Caco-2 (cell line): ENCODE measurements at regions of chr6 and their contacts with region 1.

Region 1: DNA sequence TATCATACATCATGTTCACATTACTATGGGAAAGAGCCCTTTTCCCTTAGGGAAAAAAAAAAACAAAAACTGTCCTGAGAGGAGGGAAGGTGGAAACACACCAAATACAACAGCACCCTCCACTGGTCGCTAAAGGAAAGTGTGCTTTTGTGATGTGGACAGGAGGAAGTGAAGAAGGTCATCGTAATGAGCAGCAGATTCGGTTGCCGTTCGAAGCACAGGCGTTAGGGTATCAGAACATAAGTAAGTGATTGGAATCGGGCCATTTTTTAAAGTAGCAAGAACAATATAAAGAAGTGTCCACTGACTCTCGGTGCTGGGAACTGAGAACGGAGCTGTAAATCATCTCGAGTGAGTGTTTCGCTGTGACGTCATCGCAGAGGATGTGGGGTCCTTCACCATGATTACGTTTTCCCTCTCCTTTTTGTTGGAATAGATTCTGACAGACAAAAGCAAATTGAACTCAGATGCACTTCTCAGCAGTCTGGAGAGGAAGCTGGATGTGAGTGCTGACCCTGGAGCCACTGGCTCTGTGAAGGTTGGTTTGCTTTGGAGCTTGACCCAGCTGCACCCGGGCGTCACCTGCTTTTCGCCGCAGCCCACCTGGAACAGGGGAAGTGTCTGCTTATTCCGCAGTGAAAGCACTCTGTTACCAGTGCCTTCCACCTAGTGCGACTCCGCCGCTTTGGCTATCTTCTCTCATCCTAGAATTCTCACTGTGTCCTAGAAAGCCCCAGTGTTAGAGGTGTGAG is 203.6 kb upstream of the GMDS start:
- DNase-seq: peak; percentile 68 to 70
- H3K4me3 ChIP-seq: peak overlapping the region; percentile 41
- H3K4me3 Mint-ChIP-seq: peak overlapping the region; percentile 85
- H3K27ac Mint-ChIP-seq: peak overlapping the region; percentile 90
- H3K4me1 ChIP-seq: peaks cover 14% of the 10 kb centered on the region
- H3K4me1 Mint-ChIP-seq: peaks cover 8% of the 10 kb centered on the region
- H3K27me3 ChIP-seq: no peaks in the 10 kb centered on the region
- H3K27me3 Mint-ChIP-seq: no peaks in the 10 kb centered on the region
- CTCF ChIP-seq: peak; percentile 65 to 81

Region 2: GRCh38 chr6:1596088-1596852 is 852.7 kb before region 1 on chr6:
- CTCF ChIA-PET with region 1: no interaction called
- POLR2A ChIA-PET with region 1: no interaction called
- intact Hi-C with region 1: loop called (anchors 5 kb)
- DNase-seq: peak; percentile 60 to 78
- H3K4me3 ChIP-seq: no peak overlapping the region
- H3K4me3 Mint-ChIP-seq: peak overlapping the region; percentile 23
- H3K27ac Mint-ChIP-seq: no peak overlapping the region
- H3K4me1 ChIP-seq: peaks cover 21% of the 10 kb centered on the region
- H3K4me1 Mint-ChIP-seq: peaks cover 17% of the 10 kb centered on the region
- H3K27me3 ChIP-seq: no peaks in the 10 kb centered on the region
- H3K27me3 Mint-ChIP-seq: peaks cover 5% of the 10 kb centered on the region
- CTCF ChIP-seq: peak; percentile 85 to 94

Region 3: GRCh38 chr6:2209226-2209809 is 239.7 kb before region 1 on chr6:
- CTCF ChIA-PET with region 1: interaction called, 8 read pairs
- POLR2A ChIA-PET with region 1: no interaction called
- intact Hi-C with region 1: loop called (anchors 1 kb)
- DNase-seq: peak; percentile 73 to 82
- H3K4me3 ChIP-seq: no peak overlapping the region
- H3K4me3 Mint-ChIP-seq: no peak overlapping the region
- H3K27ac Mint-ChIP-seq: no peak overlapping the region
- H3K4me1 ChIP-seq: no peaks in the 10 kb centered on the region
- H3K4me1 Mint-ChIP-seq: no peaks in the 10 kb centered on the region
- H3K27me3 ChIP-seq: no peaks in the 10 kb centered on the region
- H3K27me3 Mint-ChIP-seq: no peaks in the 10 kb centered on the region
- CTCF ChIP-seq: peak; percentile 63 to 84

Region 4: GRCh38 chr6:2353412-2354137 is 95.4 kb before region 1 on chr6:
- CTCF ChIA-PET with region 1: interaction called, 3 read pairs
- POLR2A ChIA-PET with region 1: no interaction called
- intact Hi-C with region 1: loop called (anchors 5 kb)
- DNase-seq: peak; percentile 61 to 75
- H3K4me3 ChIP-seq: no peak overlapping the region
- H3K4me3 Mint-ChIP-seq: no peak overlapping the region
- H3K27ac Mint-ChIP-seq: no peak overlapping the region
- H3K4me1 ChIP-seq: peaks cover 7% of the 10 kb centered on the region; the same call in 1 of the 2 replicates
- H3K4me1 Mint-ChIP-seq: peaks cover 8% of the 10 kb centered on the region
- H3K27me3 ChIP-seq: no peaks in the 10 kb centered on the region
- H3K27me3 Mint-ChIP-seq: no peaks in the 10 kb centered on the region
- CTCF ChIP-seq: peak; percentile 75 to 79

Region 5: GRCh38 chr6:2514965-2515555 is 66.1 kb after region 1 on chr6:
- CTCF ChIA-PET with region 1: no interaction called
- POLR2A ChIA-PET with region 1: interaction called, 4 read pairs
- intact Hi-C with region 1: loop called (anchors 2 kb)
- DNase-seq: peak; percentile 91 to 96
- H3K4me3 ChIP-seq: peak overlapping the region; percentile 13
- H3K4me3 Mint-ChIP-seq: peak overlapping the region; percentile 72
- H3K27ac Mint-ChIP-seq: peak overlapping the region; percentile 95
- H3K4me1 ChIP-seq: peaks cover 59% of the 10 kb centered on the region
- H3K4me1 Mint-ChIP-seq: peaks cover 26% of the 10 kb centered on the region
- H3K27me3 ChIP-seq: no peaks in the 10 kb centered on the region
- H3K27me3 Mint-ChIP-seq: no peaks in the 10 kb centered on the region
- CTCF ChIP-seq: no peak

Region 6: DNA sequence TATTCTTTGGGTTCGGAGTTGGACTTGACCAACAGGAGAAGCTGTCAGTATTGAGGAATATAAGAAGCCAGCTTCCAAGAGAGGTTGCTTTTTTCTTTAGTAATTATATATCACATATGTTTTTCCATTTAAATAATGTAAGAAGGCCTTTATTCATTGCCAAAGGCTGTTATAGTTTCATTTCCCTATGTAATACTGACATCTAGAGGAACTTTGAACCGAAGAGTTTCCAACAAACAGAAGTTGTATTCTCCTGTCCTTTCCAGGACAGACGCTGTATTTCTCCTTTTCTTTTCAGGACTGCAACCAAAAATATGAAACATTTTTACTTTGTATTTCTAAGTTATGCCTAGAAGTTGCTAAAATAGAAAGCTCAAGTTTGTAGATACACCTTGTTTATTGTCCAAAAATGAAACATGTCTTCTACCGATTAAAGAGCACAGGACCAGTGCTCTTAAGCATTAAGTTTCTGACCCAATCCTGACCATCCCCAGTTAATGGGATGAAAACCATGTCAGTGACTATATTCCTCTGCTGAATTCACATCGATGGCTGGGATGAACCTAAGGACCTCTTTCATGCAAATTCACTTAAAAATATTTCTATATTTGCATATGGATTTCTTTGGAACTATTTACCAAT is 246.6 kb after region 1 on chr6:
- CTCF ChIA-PET with region 1: no interaction called
- POLR2A ChIA-PET with region 1: no interaction called
- intact Hi-C with region 1: loop called (anchors 10 kb)
- DNase-seq: peak in 1 of 2 experiments; percentile 11
- H3K4me3 ChIP-seq: no peak overlapping the region
- H3K4me3 Mint-ChIP-seq: no peak overlapping the region
- H3K27ac Mint-ChIP-seq: no peak overlapping the region
- H3K4me1 ChIP-seq: 0 out of 2 replicates have a peak, but pooled peaks cover 3% of the 10 kb centered on the region
- H3K4me1 Mint-ChIP-seq: no peaks in the 10 kb centered on the region
- H3K27me3 ChIP-seq: no peaks in the 10 kb centered on the region
- H3K27me3 Mint-ChIP-seq: no peaks in the 10 kb centered on the region
- CTCF ChIP-seq: peak; percentile 20 to 41